ENCODE measurements at regions of chr17 and their contacts with region 1.

Region 1: DNA sequence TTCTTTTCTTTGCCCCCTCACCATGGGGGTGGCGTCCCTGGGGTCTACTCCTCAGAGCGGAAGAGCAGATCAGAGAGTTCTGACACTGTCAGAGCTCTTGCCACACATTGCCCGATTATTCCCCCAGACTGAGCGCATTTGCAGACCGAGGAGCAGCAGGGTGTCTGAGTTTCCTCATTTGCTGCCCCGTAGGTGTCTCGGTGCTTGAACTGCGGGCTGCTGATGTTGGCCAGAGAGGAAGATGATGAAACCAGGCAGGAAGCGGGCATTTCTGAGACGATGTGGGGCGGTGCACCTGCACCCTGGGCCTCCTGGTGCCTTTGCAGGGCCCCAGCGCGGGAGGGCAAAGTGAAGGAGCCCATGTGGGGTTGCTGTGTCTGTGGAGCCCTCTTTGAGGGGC is 55.2 kb downstream of the ARSG start:
- DNase-seq: peak; percentile 88
- ATAC-seq: peak; percentile 84
- H3K4me3 Mint-ChIP-seq: peak overlapping the region; percentile 79
- H3K27ac Mint-ChIP-seq: peak overlapping the region; percentile 100
- H3K4me1 Mint-ChIP-seq: peaks cover 67% of the 10 kb centered on the region
- H3K27me3 Mint-ChIP-seq: no peaks in the 10 kb centered on the region

Region 2: GRCh38 chr17:67707442-67707841 is 639.0 kb before region 1 on chr17:
- CTCF ChIA-PET with region 1: no interaction called
- POLR2A ChIA-PET with region 1: no interaction called
- intact Hi-C with region 1: no loop called
- DNase-seq: no peak
- ATAC-seq: no peak
- H3K4me3 Mint-ChIP-seq: no peak overlapping the region
- H3K27ac Mint-ChIP-seq: no peak overlapping the region
- H3K4me1 Mint-ChIP-seq: no peaks in the 10 kb centered on the region
- H3K27me3 Mint-ChIP-seq: peaks cover 3% of the 10 kb centered on the region

Region 3: DNA sequence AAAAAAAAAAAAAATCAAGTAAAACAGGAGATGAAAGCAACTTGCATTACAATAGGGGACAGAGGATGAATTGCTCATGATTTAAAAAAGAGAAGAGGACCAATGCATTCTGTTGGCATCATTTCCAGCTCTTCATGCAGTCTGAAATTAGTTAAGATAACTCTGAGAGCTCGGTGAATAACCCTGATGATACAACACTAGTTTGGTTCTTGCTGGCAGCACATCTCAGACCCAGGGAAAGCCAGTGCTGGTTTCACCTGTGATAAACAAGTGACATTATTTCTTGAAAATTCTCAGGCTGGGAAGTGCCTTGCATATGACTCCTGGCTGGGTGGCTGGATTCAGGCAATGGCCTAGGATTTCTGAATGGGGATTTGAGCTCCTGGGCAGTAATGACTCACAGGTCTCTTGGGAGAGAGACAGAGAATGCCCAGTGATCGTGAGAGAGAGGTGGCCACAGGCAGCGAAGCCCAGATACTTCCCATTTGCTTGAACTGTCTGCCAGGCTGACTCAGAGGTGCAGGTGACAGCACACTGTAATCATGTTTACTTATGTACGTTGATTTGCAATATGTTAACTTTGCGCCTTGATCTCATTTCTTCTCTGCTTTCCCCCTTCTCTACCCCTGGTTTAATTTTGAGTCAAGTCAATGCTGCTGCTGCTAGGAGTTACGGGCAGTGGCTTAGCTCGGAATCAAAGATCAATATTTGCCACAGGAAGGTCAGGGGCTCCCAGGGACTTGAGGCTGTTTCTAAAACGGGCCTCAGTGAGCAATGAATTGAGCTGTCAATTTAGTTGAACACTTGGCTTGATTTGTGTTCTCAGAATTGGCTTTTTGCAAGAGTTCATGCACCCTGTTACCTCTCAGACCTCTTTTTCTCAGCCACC is 28.1 kb before region 1 on chr17:
- CTCF ChIA-PET with region 1: interaction called, 5 read pairs
- POLR2A ChIA-PET with region 1: no interaction called
- intact Hi-C with region 1: loop called in 1 of 2 experiments (anchors 2 kb)
- DNase-seq: no peak
- ATAC-seq: peak; percentile 26
- H3K4me3 Mint-ChIP-seq: no peak overlapping the region
- H3K27ac Mint-ChIP-seq: no peak overlapping the region
- H3K4me1 Mint-ChIP-seq: peaks cover 35% of the 10 kb centered on the region
- H3K27me3 Mint-ChIP-seq: no peaks in the 10 kb centered on the region

Region 4: GRCh38 chr17:68398691-68399637 is 52.5 kb after region 1 on chr17:
- CTCF ChIA-PET with region 1: no interaction called
- POLR2A ChIA-PET with region 1: no interaction called
- intact Hi-C with region 1: loop called in 1 of 2 experiments (anchors 2 kb)
- DNase-seq: peak; percentile 59
- ATAC-seq: peak; percentile 35
- H3K4me3 Mint-ChIP-seq: peak overlapping the region; percentile 18
- H3K27ac Mint-ChIP-seq: peak overlapping the region; percentile 82
- H3K4me1 Mint-ChIP-seq: peaks cover 34% of the 10 kb centered on the region
- H3K27me3 Mint-ChIP-seq: no peaks in the 10 kb centered on the region

Region 5: DNA sequence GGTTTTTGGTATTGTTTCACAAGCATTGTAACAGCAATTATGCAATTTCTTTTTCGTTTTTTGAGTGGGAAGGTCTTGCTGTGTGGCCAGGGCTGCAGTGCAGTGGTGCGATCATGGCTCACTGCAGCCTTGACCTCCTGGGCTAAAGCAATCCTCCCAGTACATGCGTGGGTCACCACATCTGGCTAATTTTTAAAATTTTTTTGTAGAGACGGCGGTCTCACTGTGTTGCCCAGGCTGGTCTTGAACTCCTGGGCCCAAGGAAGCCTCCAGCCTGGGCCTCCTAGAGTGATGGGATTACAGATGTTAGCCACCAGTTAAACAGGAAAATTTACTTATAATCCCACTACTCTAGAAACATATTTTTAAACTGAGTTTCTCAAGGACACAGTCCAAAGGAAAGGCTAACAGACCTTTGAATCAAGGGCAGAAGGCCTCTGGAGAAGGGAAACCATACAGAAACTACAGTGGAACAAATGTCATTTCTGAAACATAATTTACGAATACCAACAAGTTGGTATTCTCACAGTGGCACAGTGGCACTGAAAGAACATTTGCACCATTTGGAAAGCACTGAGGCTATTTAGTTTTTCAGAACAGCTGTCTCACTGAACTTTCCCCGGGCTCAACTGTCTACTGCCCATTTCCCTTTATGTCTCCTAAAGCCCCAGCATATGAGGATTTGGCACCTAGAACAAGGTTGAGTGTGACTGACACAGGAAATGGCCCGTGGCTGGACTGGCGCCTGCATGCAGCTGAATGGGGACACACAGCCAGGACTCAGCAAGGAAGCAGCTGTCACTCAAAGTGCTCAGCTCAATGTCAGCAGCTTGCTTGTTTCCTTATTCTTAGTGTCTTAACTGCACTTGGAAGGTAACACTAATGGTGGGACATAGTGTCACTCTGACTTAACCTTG is 163.0 kb after region 1 on chr17:
- CTCF ChIA-PET with region 1: no interaction called
- POLR2A ChIA-PET with region 1: no interaction called
- intact Hi-C with region 1: no loop called
- DNase-seq: no peak
- ATAC-seq: no peak
- H3K4me3 Mint-ChIP-seq: no peak overlapping the region
- H3K27ac Mint-ChIP-seq: no peak overlapping the region
- H3K4me1 Mint-ChIP-seq: peaks cover 29% of the 10 kb centered on the region
- H3K27me3 Mint-ChIP-seq: no peaks in the 10 kb centered on the region

Measured in activated CD4-positive, alpha-beta T cell treated with anti-CD3 and anti-CD28 coated beads for 36 hours (primary cell).